Left ventricle myocardium superior (tissue), 1 donor: ENCODE measurements at regions of chr1 and their contacts with region 1.

Region 1: DNA sequence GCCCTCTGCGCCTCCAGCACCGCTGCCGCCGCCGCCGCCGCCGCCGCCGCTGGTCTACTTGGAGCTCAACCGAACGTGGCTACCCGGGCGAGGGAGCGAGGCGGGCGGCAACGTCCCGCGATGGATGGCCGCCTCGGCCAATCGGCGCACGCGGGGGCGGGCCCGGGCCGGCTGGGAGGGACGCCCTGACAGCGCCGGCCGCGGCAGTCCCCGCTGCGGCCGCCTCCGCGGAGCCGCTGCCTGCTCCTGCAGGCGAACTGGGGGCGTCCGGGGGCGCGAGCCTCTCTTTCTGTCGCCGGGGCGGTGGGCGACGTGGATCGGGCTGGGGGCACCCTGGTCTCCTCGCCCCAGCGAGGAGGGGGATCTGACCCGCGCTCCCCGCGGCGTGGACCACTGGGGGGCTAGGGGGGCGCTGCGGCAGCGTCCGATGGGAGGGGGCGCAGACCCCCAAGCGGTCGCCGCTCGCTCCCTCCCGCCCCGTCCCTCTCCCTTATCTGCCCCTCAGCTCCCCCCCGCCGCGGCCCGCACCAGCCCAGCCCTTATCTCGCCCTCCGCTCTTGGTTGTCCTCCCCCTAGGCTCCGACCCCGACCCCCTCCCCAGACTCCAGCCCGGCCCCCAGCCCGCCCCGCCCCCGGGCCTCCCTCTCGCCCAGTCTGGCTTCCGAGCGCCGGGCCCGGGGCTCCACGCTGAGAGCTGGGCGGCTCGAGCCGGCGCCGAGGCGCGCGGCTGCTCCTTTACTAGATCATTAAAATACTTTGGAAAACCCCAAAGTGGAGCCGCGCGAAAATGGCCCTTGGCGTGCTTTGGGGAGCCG is at the start of gene SSBP3:
- DNase-seq: peak; percentile 96
- ATAC-seq: peak; percentile 90
- total RNA-seq, gene SSBP3: 57.0 TPM

Region 2: DNA sequence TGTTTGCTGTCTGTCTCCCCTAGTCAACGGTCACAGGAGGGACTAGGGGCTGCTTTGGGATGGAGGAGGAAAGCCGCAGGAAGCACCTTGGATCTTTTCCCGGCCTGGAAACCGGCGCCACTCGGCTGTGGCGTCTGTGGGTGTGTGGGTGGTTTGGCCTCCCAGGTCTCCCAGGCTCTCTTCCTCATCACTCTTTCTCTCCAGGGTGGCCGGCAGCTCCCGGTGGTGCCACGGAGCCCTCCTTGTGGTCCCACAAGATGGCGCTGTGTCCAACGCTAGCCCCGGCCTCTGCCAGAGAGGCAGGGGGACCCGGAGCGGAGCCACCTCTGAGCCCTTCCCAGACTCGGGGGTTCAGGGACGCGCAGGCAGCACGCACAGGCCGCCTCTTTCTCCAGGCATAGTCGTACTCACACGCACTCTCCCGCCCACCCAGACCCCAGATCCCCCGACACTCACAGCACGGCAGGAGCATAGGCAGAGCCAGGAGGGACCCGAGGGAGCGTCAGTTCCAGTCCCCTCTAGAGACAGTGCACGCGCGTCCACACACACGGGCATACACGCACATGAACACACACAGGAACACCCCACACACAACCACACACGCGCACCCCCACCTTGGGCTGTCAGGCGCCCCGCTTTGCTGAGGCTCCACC is 284.9 kb before region 1 on chr1:
- intact Hi-C with region 1: loop called (anchors 10 kb)
- DNase-seq: peak; percentile 86
- ATAC-seq: peak; percentile 93

Region 3: DNA sequence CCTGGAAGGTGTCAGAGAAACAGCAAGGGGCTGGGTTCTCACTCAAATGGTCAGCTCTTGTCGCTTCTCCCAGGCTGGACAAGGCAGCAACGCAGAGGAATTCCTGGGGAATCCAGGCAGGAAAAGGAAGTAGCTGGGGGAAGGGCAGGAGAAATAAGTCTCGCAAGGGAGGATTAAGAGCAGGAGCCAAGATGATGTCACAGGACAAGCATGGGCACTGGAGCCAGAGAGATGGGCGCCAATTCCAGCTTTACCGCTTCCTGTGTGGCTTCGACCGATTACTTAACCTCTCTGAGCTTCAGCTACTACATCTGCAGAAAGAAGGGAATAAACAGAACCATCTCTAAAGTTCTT is 70.8 kb before region 1 on chr1:
- intact Hi-C with region 1: no loop called
- DNase-seq: peak; percentile 67
- ATAC-seq: peak; percentile 76

Region 4: GRCh38 chr1:54488779-54489626 is 82.5 kb after region 1 on chr1:
- intact Hi-C with region 1: loop called (anchors 5 kb)
- DNase-seq: peak; percentile 90
- ATAC-seq: peak; percentile 79

Region 5: GRCh38 chr1:54528613-54529012 is 122.1 kb after region 1 on chr1:
- intact Hi-C with region 1: no loop called
- DNase-seq: no peak
- ATAC-seq: no peak